A549 (cell line): ENCODE measurements at regions of chr3 and their contacts with region 1.

Region 1: DNA sequence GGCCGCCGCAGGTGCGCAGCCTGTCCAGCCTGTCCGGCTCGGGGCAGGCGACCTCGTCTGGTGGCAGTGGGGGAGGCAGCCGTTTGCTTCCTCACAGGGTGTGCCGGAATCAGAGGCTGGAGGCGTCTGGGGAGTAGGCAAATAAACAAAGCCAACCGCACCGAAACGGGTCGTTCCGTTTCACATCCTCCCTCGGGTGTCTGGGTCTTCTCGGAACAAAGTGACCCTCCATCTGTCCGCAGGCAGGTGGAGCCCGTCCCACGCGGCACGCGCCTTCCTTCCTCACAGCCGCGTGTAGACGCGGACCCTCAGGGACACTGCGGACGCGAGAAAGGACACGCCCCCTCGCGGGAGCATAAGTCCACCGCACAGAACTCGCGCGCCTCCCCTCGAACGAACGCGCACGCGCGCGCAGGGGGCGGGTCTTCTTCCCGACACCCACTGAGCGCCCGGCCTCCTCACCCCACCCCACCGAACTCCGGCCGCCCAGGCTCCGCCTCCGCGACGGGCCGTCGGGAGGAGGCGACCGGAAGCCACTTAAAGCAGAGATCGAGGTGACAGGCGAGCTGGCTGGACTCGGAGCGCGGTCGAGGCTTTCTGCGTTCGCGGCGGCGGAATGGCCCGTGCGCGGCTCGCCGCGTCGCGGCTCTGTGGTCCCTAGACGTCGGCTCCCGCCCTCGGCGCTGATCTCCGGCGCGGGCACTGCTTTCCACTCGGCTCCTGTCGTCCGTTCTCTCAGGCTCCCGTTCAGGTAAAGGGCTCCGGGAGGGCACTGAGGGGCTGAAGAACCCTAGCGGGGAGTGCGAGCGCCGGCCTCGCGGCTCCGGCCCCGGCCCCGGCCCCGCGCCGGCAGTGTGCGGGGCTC is at the start of gene TIPARP:
- DNase-seq: peak; percentile 85 to 98
- ATAC-seq: peak; percentile 84 to 88
- H3K4me3 ChIP-seq: peak within 1 kb of the TSS; percentile 90
- H3K27ac ChIP-seq: peak within 1 kb of the TSS; percentile 88 to 92
- H3K4me1 ChIP-seq: peaks cover 30% of the 10 kb centered on the region
- CTCF ChIP-seq: peak; percentile 80
- EP300 ChIP-seq: no peak
- POLR2A ChIP-seq: peak; percentile 98
- RAD21 ChIP-seq: peak; percentile 71 to 91
- polyA plus RNA-seq, gene TIPARP: 16.5 and 16.7 TPM in 2 replicates

Region 2: DNA sequence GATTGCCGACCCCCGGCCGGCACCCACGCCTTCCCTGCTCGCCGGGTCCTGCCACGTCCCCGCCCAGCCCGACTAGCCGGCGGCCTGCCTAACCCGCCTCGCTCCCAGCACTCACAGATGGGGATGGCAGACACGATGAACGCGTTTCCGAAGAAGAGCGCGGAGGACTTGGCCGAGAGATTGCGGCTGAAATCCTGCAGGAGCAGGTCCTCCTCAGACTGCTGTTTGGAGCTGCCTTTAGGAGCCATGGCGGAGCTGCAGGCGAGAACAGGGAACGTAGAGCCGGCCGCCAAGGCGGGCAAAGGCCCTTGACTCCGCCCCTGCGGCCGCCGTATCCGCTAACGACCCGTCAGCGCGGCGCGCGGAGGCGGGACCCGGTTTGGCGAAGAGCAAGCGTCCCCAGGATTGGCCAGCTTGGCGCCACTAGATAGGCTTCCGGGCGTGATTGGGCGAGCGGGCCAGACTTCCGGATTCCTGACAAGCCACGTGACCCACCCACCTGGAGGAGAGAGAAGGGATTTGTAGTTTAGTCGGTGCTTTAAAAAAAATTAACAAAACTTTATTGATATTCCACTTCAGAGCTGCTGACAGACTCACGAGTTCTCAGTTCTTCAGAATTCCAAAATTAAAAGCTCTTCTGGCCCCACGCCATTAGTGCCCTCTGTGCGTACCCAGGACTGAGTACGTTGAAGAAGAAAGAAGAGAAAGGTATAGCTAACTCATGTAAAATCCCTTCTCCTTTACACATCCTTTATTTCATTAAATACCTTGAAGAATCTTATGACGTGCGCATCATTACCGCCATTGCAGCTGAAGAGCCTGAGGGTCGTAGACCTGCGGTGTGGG is 119.2 kb before region 1 on chr3 and contains the start of gene SSR3:
- CTCF ChIA-PET with region 1: interaction called, 16 read pairs
- POLR2A ChIA-PET with region 1: interaction called, 38 read pairs
- DNase-seq: peak; percentile 92 to 99
- ATAC-seq: peak; percentile 99 to 100
- H3K4me3 ChIP-seq: peak within 1 kb of the TSS; percentile 61
- H3K27ac ChIP-seq: peak within 1 kb of the TSS; percentile 83 to 93
- H3K4me1 ChIP-seq: peaks cover 16% of the 10 kb centered on the region; the same call in 2 of the 3 replicates
- CTCF ChIP-seq: no peak
- EP300 ChIP-seq: no peak
- POLR2A ChIP-seq: peak; percentile 76
- RAD21 ChIP-seq: no peak
- polyA plus RNA-seq, gene SSR3: 187 and 242 TPM in 2 replicates

Region 3: DNA sequence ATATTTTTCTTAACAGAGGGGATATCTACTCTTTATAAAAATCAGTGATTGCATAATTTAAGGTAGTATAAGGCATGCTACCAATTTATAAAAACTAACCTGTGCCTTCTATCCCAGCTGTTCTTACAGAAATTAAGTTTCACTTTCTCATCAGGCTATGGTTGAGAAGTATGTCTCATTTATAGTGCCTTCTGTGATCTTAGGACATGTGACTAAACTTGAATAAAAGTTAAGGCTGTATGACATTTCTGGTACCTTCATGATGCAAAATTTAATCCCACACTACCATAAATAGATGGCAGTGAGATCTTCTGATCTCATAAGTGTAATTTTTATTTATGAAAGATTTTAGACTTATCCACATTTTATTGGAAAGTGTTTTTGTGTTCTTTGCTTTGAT is 12.7 kb after region 1 on chr3:
- CTCF ChIA-PET with region 1: interaction called, 11 read pairs
- POLR2A ChIA-PET with region 1: interaction called, 12 read pairs
- DNase-seq: no peak
- ATAC-seq: no peak
- H3K4me3 ChIP-seq: no peak overlapping the region
- H3K27ac ChIP-seq: no peak overlapping the region
- H3K4me1 ChIP-seq: peaks cover 85% of the 10 kb centered on the region
- CTCF ChIP-seq: no peak
- EP300 ChIP-seq: no peak
- POLR2A ChIP-seq: no peak
- RAD21 ChIP-seq: no peak

Region 4: DNA sequence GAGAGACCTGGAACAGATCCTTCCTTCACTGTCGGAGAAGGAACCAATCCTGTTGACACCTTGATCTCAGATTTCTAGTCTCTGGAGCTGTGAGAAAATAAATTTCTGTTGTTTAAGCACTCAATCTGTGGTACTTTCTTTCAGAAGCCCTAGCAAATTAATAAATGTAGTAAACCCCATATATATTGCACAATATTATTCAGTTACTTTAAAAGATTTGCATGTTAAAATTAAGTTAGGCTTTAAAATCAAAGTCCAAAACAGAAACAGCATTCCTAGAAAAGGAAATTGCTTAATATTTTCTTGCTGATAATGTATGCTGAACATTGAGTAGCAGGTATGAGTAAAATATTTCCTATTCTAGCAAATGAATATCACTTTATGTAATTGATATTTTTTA is 265.0 kb after region 1 on chr3:
- CTCF ChIA-PET with region 1: no interaction called
- POLR2A ChIA-PET with region 1: no interaction called
- DNase-seq: no peak
- ATAC-seq: no peak
- H3K4me3 ChIP-seq: no peak overlapping the region
- H3K27ac ChIP-seq: no peak overlapping the region
- H3K4me1 ChIP-seq: no peaks in the 10 kb centered on the region
- CTCF ChIP-seq: no peak
- EP300 ChIP-seq: no peak
- POLR2A ChIP-seq: no peak
- RAD21 ChIP-seq: no peak

Region 5: GRCh38 chr3:157081681-157082210 is 407.5 kb after region 1 on chr3:
- CTCF ChIA-PET with region 1: interaction called, 96 read pairs
- POLR2A ChIA-PET with region 1: interaction called, 6 read pairs
- DNase-seq: peak; percentile 85 to 91
- ATAC-seq: peak; percentile 98 to 99
- H3K4me3 ChIP-seq: no peak overlapping the region
- H3K27ac ChIP-seq: peak overlapping the region; percentile 49 to 72; a peak in 5 of 6 replicates
- H3K4me1 ChIP-seq: peaks cover 7% of the 10 kb centered on the region; the same call in 1 of the 3 replicates
- CTCF ChIP-seq: peak; percentile 90
- EP300 ChIP-seq: no peak
- POLR2A ChIP-seq: no peak
- RAD21 ChIP-seq: peak; percentile 98

Region 6: GRCh38 chr3:157130467-157131251 is 456.4 kb after region 1 on chr3:
- CTCF ChIA-PET with region 1: interaction called, 100 read pairs
- POLR2A ChIA-PET with region 1: interaction called, 3 read pairs
- DNase-seq: peak; percentile 75 to 85
- ATAC-seq: peak; percentile 60 to 68
- H3K4me3 ChIP-seq: peak overlapping the region; percentile 2; the same call in 1 of the 3 replicates
- H3K27ac ChIP-seq: peak overlapping the region; percentile 77 to 80
- H3K4me1 ChIP-seq: peaks cover 66% of the 10 kb centered on the region
- CTCF ChIP-seq: peak; percentile 83
- EP300 ChIP-seq: peak in 1 of 2 experiments; percentile 44; a peak in 1 of 5 replicates
- POLR2A ChIP-seq: no peak
- RAD21 ChIP-seq: peak; percentile 77 to 87